ENCODE measurements at regions of chr12 and their contacts with region 1.

Region 1: GRCh38 chr12:44000309-44000952 is 164.6 kb downstream of the TMEM117 start:
- DNase-seq: peak; percentile 47
- CTCF ChIP-seq: peak; percentile 39

Region 2: DNA sequence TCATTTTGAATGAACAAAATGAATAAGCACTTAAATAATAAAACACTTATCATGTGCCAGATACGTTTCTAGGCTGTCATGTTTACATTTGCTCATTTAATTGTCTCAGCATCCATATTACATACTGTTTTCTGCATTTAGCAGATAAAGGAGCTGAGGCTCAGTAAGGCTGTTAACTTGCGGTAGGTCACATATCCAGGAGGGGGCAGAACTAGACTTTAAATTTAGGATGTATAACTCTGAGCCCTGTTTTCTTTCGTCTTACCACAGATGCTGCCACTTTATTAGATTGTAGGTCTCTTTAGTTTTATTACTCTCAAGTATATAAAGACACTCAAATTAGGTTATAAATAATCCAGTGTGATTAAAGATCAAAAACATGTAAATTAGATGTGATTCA is 223.9 kb before region 1 on chr12:
- CTCF ChIA-PET with region 1: no interaction called
- POLR2A ChIA-PET with region 1: no interaction called
- DNase-seq: peak; percentile 21
- CTCF ChIP-seq: peak; percentile 45

Region 3: GRCh38 chr12:43988838-43989560 is 11.4 kb before region 1 on chr12:
- CTCF ChIA-PET with region 1: interaction called, 12 read pairs
- POLR2A ChIA-PET with region 1: no interaction called
- DNase-seq: peak; percentile 16
- CTCF ChIP-seq: no peak

Region 4: GRCh38 chr12:44015335-44015941 is 15.0 kb after region 1 on chr12:
- CTCF ChIA-PET with region 1: interaction called, 20 read pairs
- POLR2A ChIA-PET with region 1: no interaction called
- DNase-seq: peak; percentile 21
- CTCF ChIP-seq: peak; percentile 47

Measured in GM10248 (cell line).